ENCODE measurements at regions of chr2 and their contacts with region 1.

Region 1: GRCh38 chr2:96536445-96537065 is at the start of gene ARID5A:
- DNase-seq: peak; percentile 97
- ATAC-seq: peak; percentile 66
- H3K4me3 Mint-ChIP-seq: peak within 1 kb of the TSS; percentile 97
- H3K27ac Mint-ChIP-seq: peak within 1 kb of the TSS; percentile 90
- H3K4me1 Mint-ChIP-seq: peaks cover 64% of the 10 kb centered on the region
- H3K27me3 Mint-ChIP-seq: no peaks in the 10 kb centered on the region
- total RNA-seq, gene ARID5A: 179 to 191 TPM

Region 2: DNA sequence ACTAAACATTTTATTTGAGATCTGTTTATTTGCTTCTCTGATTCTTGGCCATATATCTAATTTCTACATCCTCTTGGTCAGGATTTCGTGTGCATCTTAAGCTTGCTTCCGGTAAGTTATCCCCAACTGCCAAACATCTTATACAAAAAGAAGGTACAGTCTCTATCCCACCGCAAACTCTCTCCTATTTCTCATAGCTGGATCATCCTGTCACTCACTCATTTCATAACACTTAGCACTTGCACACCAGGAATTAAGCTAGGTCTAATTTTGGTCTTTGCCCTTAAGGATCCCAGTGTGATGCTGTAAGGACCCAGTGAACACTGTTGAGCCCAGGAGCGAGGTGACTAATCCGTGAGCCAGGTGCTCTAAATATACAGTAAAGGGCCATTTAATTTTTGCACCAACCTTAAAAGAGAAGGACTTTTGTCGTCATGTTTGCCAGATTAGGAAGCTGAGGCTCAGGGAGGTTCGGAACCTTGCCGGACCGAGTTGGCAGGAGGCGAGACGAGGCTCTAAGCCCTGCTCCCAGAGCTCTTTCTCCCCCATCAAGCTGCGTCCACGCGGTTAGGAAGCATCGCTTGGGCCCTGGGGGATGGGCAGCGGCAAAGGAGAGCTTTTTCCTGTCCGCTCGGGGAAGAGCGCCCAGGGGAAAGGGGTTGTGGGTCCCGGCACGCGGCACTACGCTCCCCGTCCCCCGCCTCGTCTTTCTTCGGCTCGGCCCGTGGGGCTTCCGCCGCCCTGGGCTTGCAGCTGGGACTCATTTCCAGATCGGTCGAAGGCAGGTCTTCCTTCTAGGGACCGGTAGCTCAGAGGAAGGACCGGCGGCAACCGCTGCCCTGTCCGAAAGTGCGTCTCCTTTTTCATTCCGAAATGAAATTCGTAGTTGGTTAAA is 215.6 kb before region 1 on chr2:
- CTCF ChIA-PET with region 1: interaction called, 3 read pairs
- POLR2A ChIA-PET with region 1: interaction called, 5 read pairs
- intact Hi-C with region 1: loop called in 1 of 2 experiments (anchors 5 kb)
- DNase-seq: peak; percentile 54
- ATAC-seq: peak; percentile 10
- H3K4me3 Mint-ChIP-seq: peak overlapping the region; percentile 73
- H3K27ac Mint-ChIP-seq: peak overlapping the region; percentile 63
- H3K4me1 Mint-ChIP-seq: peaks cover 52% of the 10 kb centered on the region
- H3K27me3 Mint-ChIP-seq: peaks cover 10% of the 10 kb centered on the region

Region 3: DNA sequence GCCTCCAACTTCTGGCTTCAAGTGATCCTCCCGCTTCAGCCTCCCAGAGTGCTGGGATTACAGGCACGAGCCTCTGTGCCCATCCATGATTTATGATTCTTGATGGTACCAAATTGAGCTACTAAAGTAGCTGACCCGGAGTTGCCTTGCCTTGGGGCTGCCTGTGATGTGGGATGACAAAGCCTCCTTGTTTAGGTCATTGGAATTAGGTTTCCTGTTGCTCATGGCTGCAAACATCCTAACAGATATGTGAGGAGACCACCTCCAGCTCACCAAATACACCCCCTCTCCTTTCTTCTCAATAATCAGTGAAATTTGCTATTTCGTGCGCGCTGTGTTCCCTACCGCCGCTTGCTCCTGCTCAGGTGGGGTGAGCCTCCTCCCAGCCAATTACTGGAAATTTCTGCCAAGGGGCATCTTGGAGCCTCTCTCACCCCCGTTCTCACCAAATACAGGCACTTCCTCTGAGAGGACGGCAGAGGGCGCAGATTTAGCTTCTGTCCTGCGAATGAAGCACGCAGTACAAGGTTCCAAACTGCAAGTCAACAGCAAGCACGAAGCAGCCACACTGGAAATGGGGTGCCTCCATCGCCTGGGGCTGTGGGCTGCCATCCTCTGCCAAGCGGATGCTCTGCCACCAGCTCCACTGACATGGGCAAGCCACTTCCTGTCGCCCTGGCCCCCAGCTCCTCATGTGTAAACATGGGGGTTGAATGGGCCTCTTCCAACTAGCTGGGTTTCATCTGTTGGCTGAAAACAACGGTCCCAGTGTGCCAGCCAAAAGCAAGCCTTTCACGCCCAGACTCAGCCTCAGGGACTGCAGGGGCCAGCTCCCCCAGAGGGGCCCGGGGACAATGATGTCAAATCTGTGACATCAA is 129.3 kb before region 1 on chr2:
- CTCF ChIA-PET with region 1: interaction called, 10 read pairs
- POLR2A ChIA-PET with region 1: interaction called, 6 read pairs
- intact Hi-C with region 1: no loop called
- DNase-seq: peak; percentile 83
- ATAC-seq: peak; percentile 93
- H3K4me3 Mint-ChIP-seq: no peak overlapping the region
- H3K27ac Mint-ChIP-seq: peak overlapping the region; percentile 87
- H3K4me1 Mint-ChIP-seq: peaks cover 38% of the 10 kb centered on the region
- H3K27me3 Mint-ChIP-seq: no peaks in the 10 kb centered on the region

Region 4: DNA sequence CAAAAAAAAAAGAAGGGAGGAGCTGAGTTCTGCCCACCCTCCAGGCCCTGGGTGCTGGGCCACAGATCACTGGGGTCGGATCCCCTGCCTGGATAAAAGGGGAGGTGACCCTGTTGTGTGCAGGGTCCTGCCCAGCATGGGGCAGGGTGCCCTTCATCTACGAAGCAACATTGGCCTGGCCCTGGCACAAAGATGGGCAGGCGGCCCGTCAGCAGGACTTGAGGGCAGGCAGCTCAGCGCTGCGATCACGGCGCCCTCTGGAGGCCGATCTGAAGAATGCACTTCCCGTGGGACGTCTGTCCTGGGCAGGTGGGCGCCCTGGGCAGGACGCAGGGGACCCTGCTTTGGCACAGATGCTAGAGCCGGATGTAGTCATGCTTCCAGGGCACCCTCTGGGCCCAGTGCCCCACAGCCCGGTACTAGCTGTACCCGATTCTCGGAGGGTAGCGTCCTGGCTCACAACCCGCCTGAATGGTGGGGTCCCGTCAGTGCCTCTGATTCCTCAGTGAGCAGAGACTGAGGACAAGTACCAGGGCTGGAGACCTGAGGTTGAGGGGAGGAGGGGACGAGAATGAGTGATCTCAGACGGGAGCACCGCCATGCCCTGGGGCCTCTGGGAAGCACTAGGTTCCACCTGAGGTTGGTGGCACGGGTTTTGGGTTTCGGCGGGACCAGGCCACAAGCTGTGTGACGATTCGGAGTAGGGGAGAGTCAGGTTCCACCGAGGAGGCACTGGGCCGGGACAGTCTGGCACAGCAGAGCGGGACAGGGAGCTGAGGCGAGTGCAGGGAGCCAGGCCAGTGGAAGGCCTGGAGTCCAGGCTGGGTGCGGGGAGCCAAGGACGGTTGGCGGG is 18.0 kb after region 1 on chr2:
- CTCF ChIA-PET with region 1: interaction called, 95 read pairs
- POLR2A ChIA-PET with region 1: interaction called, 58 read pairs
- intact Hi-C with region 1: loop called (anchors 1 to 2 kb)
- DNase-seq: peak; percentile 86
- ATAC-seq: peak; percentile 42
- H3K4me3 Mint-ChIP-seq: peak overlapping the region; percentile 32
- H3K27ac Mint-ChIP-seq: peak overlapping the region; percentile 75
- H3K4me1 Mint-ChIP-seq: peaks cover 29% of the 10 kb centered on the region
- H3K27me3 Mint-ChIP-seq: no peaks in the 10 kb centered on the region

Region 5: GRCh38 chr2:96739633-96740428 is 203.3 kb after region 1 on chr2 and contains the start of gene LMAN2L:
- CTCF ChIA-PET with region 1: no interaction called
- POLR2A ChIA-PET with region 1: no interaction called
- intact Hi-C with region 1: loop called (anchors 1 to 5 kb)
- DNase-seq: peak; percentile 98
- ATAC-seq: peak; percentile 100
- H3K4me3 Mint-ChIP-seq: peak within 1 kb of the TSS; percentile 98
- H3K27ac Mint-ChIP-seq: peak within 1 kb of the TSS; percentile 84
- H3K4me1 Mint-ChIP-seq: peaks cover 40% of the 10 kb centered on the region
- H3K27me3 Mint-ChIP-seq: no peaks in the 10 kb centered on the region
- total RNA-seq, gene LMAN2L: 4.8 to 5.7 TPM